Panc1 (cell line): ENCODE measurements at regions of chr20 and their contacts with region 1.

Region 1: GRCh38 chr20:52219441-52219840 is 27.9 kb upstream of the ZFP64 start:
- DNase-seq: peak; percentile 5
- ATAC-seq: no peak
- H3K4me3 ChIP-seq: no peak overlapping the region
- H3K27ac ChIP-seq: no peak overlapping the region
- H3K4me1 ChIP-seq: no peaks in the 10 kb centered on the region
- H3K27me3 ChIP-seq: no peaks in the 10 kb centered on the region
- CTCF ChIP-seq: peak; percentile 20

Region 2: GRCh38 chr20:52031563-52032303 is 187.7 kb before region 1 on chr20:
- CTCF ChIA-PET with region 1: no interaction called
- POLR2A ChIA-PET with region 1: interaction called, 15 read pairs
- in situ Hi-C with region 1: no loop called
- intact Hi-C with region 1: no loop called
- DNase-seq: no peak
- ATAC-seq: 0 out of 2 replicates have a peak, but pooled peaks have one; percentile 48
- H3K4me3 ChIP-seq: no peak overlapping the region
- H3K27ac ChIP-seq: peak overlapping the region; percentile 6; the same call in 1 of the 2 replicates
- H3K4me1 ChIP-seq: peaks cover 6% of the 10 kb centered on the region; the same call in 1 of the 2 replicates
- H3K27me3 ChIP-seq: no peaks in the 10 kb centered on the region
- CTCF ChIP-seq: no peak

Region 3: GRCh38 chr20:52104546-52105441 is 114.6 kb before region 1 on chr20:
- CTCF ChIA-PET with region 1: no interaction called
- POLR2A ChIA-PET with region 1: no interaction called
- in situ Hi-C with region 1: no loop called
- intact Hi-C with region 1: no loop called
- DNase-seq: no peak
- ATAC-seq: no peak
- H3K4me3 ChIP-seq: no peak overlapping the region
- H3K27ac ChIP-seq: no peak overlapping the region
- H3K4me1 ChIP-seq: no peaks in the 10 kb centered on the region
- H3K27me3 ChIP-seq: no peaks in the 10 kb centered on the region
- CTCF ChIP-seq: no peak

Region 4: DNA sequence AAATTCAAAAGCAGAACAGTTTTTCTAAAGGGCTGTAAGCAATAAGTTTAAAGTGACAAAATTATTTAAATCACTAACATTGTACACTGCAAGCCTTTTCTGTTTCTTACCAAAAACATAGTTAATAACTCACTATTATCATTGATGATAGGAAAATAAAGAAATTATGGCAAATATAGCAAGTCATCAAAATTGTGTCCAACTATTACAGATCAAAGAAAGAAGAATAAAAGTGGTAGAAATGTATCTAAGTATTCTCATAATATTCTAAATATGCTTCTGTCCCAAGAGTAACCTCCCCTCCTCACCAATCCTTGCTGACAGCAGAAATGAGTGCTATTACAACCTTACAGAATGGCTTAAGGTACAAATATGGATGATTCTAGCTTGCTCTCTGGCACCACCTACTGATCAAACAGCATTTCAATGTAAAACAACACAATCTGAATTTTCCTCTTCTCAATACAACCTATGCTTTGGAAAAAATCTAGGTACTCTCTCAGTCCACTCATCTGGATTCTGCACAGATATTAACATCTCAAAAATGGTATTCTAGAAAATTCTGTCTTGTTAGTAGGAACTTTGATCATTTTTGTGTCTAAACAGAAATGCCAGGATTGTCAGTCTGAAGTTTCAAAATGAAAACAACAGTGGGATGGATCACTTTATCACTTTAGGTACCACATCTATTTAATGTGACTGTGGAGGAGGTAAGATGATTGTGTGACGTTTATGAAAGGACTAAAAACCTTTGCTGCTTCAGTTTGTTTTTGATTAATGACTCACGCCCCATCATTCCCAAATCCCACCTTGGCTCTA is 68.8 kb before region 1 on chr20:
- CTCF ChIA-PET with region 1: no interaction called
- POLR2A ChIA-PET with region 1: no interaction called
- in situ Hi-C with region 1: no loop called
- intact Hi-C with region 1: no loop called
- DNase-seq: peak; percentile 64
- ATAC-seq: peak; percentile 72
- H3K4me3 ChIP-seq: no peak overlapping the region
- H3K27ac ChIP-seq: no peak overlapping the region
- H3K4me1 ChIP-seq: no peaks in the 10 kb centered on the region
- H3K27me3 ChIP-seq: no peaks in the 10 kb centered on the region
- CTCF ChIP-seq: peak; percentile 81; the same call in 1 of the 2 replicates

Region 5: GRCh38 chr20:52279706-52280105 is 60.3 kb after region 1 on chr20:
- CTCF ChIA-PET with region 1: no interaction called
- POLR2A ChIA-PET with region 1: no interaction called
- in situ Hi-C with region 1: no loop called
- intact Hi-C with region 1: no loop called
- DNase-seq: no peak
- ATAC-seq: no peak
- H3K4me3 ChIP-seq: no peak overlapping the region
- H3K27ac ChIP-seq: no peak overlapping the region
- H3K4me1 ChIP-seq: no peaks in the 10 kb centered on the region
- H3K27me3 ChIP-seq: peaks cover 5% of the 10 kb centered on the region
- CTCF ChIP-seq: no peak